Naive thymus-derived CD4-positive, alpha-beta T cell (primary cell): ENCODE measurements at regions of chr17 and their contacts with region 1.

Region 1: GRCh38 chr17:49997791-49998703 is 3.0 kb upstream of the DLX3 start:
- DNase-seq: peak; percentile 69 to 90 (median 81)
- ATAC-seq: peak; percentile 89
- H3K4me3 ChIP-seq: no peak overlapping the region
- H3K4me3 Mint-ChIP-seq: peak overlapping the region in 2 of 10 donors; percentile 33 to 71
- H3K27ac ChIP-seq: no peak overlapping the region
- H3K27ac Mint-ChIP-seq: no peak overlapping the region
- H3K4me1 ChIP-seq: peaks cover 11 to 30% of the 10 kb centered on the region in 2 donors
- H3K4me1 Mint-ChIP-seq: peaks cover 12 to 40% (median 28%) of the 10 kb centered on the region in 7 donors
- H3K27me3 ChIP-seq: peaks cover 19 to 35% of the 10 kb centered on the region in 2 donors
- H3K27me3 Mint-ChIP-seq: peaks cover 73 to 79% (median 76%) of the 10 kb centered on the region in 5 donors

Region 2: DNA sequence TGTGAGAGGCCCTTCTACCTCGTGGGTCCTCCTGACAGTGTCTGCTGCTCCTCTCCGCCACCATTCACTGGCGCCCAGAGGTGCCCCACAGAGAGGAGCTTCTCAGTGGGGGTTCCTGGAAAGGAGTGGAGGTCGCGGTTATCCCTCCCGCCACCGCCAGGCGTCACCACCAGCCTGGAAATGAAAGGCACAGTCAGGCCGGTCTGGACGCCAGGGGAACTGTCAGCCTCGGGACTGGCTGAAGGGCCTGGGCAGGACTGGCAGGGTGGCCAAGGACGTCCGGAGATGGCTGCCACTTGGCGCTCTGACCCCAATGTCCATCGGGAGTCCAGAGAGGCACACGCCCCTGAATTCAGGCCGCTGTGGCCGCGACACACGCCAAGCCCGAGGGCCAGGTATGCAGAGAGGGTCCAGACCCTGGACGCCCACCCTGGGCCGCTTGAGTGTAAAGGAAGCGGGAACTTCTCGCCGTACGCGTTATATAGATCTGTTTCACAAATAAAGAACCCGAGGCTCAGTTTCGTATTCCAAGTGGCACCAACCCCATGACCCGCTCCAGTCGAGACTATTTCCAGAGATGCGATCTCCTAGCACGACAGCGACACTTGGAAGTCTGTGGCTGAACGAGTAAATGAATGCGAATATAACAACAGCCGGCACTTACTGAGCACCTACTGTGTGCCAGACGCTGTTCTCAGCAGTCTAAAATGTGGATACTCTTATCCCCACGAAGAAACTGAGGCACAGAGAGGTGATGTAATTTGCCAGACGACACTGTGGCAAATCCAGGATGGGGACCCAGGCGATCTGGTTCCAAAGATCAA is 430.0 kb before region 1 on chr17:
- CTCF ChIA-PET with region 1: interaction called, 15 read pairs
- POLR2A ChIA-PET with region 1: no interaction called
- intact Hi-C with region 1: loop called (anchors 1 kb)
- DNase-seq: peak; percentile 50 to 88 (median 72)
- ATAC-seq: peak; percentile 64
- H3K4me3 ChIP-seq: peak overlapping the region; percentile 15
- H3K4me3 Mint-ChIP-seq: peak overlapping the region; percentile 53 to 80 (median 70)
- H3K27ac ChIP-seq: no peak overlapping the region
- H3K27ac Mint-ChIP-seq: peak overlapping the region in 1 of 9 donors; percentile 7
- H3K4me1 ChIP-seq: peaks cover 6 to 7% of the 10 kb centered on the region in 2 donors
- H3K4me1 Mint-ChIP-seq: peaks cover 0 to 28% (median 15%) of the 10 kb centered on the region in 7 donors
- H3K27me3 ChIP-seq: no peaks in the 10 kb centered on the region
- H3K27me3 Mint-ChIP-seq: peaks cover under 1 to 38% (median 4%) of the 10 kb centered on the region in 5 donors

Region 3: DNA sequence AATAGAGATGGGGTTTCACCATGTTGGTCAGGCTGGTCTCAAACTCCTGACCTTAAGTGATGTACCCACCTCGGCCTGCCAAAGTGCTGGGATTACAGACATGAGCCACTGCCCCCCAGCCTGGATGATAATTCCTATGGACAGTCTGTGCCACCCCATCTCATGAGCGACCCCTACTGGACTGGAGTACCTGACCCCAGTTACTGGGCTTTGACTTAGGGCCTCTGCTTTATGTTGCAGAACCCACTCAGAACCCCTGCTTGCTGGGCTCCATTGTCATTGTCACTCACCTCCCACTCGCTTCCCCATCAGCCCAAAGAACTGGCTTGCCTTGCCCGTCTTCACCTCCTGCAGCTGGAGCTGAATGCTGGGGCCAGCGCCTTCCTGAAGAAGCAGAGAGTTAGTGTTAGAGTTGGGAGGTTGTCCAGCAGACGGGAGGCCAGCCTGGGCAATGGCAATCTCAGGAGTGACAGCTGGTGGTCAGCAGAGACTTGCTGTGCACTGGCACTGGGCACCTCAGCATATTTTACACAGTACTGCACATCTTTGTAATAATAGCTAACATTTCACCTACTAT is 154.2 kb before region 1 on chr17:
- CTCF ChIA-PET with region 1: no interaction called
- POLR2A ChIA-PET with region 1: no interaction called
- intact Hi-C with region 1: no loop called
- DNase-seq: no peak
- ATAC-seq: no peak
- H3K4me3 ChIP-seq: no peak overlapping the region
- H3K4me3 Mint-ChIP-seq: no peak overlapping the region
- H3K27ac ChIP-seq: no peak overlapping the region
- H3K27ac Mint-ChIP-seq: peak overlapping the region in 5 of 9 donors; percentile 3 to 76 (median 68)
- H3K4me1 ChIP-seq: peaks cover 0 to 3% of the 10 kb centered on the region in 2 donors
- H3K4me1 Mint-ChIP-seq: peaks cover 0 to 24% (median 18%) of the 10 kb centered on the region in 7 donors
- H3K27me3 ChIP-seq: no peaks in the 10 kb centered on the region
- H3K27me3 Mint-ChIP-seq: no peaks in the 10 kb centered on the region

Region 4: DNA sequence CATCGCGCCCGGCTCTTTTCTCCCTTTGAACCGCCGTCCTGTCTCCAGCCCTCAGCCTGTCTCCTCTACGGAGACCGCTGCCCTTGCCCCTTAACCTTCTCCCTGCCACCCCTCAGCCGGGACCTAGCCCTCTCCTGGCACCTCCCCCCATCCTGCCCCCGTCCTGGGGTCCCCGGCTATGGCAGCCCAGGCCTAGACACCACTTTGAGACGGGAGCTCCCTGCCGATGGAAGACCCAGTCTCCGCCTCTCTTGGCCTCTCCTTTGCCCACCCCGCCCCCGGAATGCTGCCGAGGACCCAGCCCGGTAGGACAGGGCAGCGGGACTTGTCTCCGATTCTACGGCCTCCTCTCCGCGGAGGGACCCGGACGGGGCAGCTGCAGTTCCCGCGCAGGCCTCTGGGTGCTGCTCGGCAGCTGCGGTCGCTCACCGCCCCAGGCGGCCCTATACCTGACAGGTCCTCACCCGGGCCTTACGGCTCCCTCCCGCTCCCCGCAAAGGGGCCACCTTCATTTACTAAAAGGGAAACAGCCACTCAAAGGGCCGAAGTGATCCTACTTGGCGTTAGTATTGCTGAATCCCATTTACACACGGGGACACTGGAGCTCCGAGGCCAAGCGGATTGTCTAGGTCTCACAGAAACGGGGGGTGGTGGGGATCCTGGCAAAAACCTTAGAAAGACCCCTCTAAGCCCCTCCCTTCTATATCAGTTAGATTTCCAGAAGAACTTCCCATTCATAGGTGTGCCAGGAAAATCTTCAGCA is 117.6 kb before region 1 on chr17:
- CTCF ChIA-PET with region 1: interaction called, 35 read pairs
- POLR2A ChIA-PET with region 1: no interaction called
- intact Hi-C with region 1: loop called (anchors 1 kb)
- DNase-seq: peak; percentile 31 to 77 (median 58)
- ATAC-seq: peak; percentile 95
- H3K4me3 ChIP-seq: no peak overlapping the region
- H3K4me3 Mint-ChIP-seq: peak overlapping the region in 8 of 10 donors; percentile 21 to 74 (median 44)
- H3K27ac ChIP-seq: no peak overlapping the region
- H3K27ac Mint-ChIP-seq: no peak overlapping the region
- H3K4me1 ChIP-seq: peaks cover 3 to 7% of the 10 kb centered on the region in 2 donors
- H3K4me1 Mint-ChIP-seq: peaks cover 0 to 7% (median 5%) of the 10 kb centered on the region in 7 donors
- H3K27me3 ChIP-seq: peaks cover 4 to 9% of the 10 kb centered on the region in 2 donors
- H3K27me3 Mint-ChIP-seq: peaks cover 20 to 52% (median 43%) of the 10 kb centered on the region in 5 donors

Region 5: GRCh38 chr17:49926886-49927285 is 71.2 kb before region 1 on chr17:
- CTCF ChIA-PET with region 1: no interaction called
- POLR2A ChIA-PET with region 1: no interaction called
- intact Hi-C with region 1: no loop called
- DNase-seq: no peak
- ATAC-seq: no peak
- H3K4me3 ChIP-seq: no peak overlapping the region
- H3K4me3 Mint-ChIP-seq: no peak overlapping the region
- H3K27ac ChIP-seq: no peak overlapping the region
- H3K27ac Mint-ChIP-seq: no peak overlapping the region
- H3K4me1 ChIP-seq: no peaks in the 10 kb centered on the region
- H3K4me1 Mint-ChIP-seq: peaks cover 0 to 2% (median 0%) of the 10 kb centered on the region in 7 donors
- H3K27me3 ChIP-seq: no peaks in the 10 kb centered on the region
- H3K27me3 Mint-ChIP-seq: peaks cover 4 to 50% (median 26%) of the 10 kb centered on the region in 5 donors

Region 6: DNA sequence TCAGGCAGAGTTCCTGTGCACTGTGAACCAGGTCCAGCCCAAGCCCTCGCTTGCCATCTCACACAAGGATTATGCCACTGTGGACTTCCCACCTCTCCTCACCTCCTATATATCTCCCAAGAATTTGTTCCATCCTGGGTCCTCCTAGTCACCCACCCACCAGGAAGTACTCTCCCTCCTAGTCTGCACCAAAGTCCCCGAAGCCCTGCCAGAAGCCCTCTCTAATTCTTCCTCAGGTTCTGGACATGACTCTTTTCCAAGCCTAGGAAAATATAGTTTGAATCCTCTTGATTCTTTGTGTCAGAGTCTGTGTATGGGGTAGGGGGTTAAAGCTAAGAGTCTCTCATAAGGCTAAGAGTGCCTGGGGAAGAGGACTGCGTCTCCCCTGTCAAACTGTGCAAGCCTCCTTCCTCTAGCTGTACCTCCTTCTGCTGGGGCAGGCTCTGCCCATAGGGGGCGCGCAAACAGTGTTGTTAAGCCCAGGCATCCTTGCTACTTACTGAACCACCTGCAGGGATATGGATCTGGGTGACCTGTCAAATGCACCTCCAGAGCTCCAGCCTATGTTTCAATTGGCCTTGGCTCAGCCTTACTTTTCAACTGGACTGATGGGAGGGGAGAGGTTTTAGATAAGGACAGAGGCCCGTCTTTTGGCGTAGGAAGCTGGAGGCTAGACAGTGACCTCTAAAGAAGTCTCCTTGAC is 45.7 kb before region 1 on chr17:
- CTCF ChIA-PET with region 1: interaction called, 152 read pairs
- POLR2A ChIA-PET with region 1: interaction called, 3 read pairs
- intact Hi-C with region 1: loop called (anchors 1 kb)
- DNase-seq: peak; percentile 62 to 82 (median 77)
- ATAC-seq: peak; percentile 95
- H3K4me3 ChIP-seq: no peak overlapping the region
- H3K4me3 Mint-ChIP-seq: no peak overlapping the region
- H3K27ac ChIP-seq: no peak overlapping the region
- H3K27ac Mint-ChIP-seq: no peak overlapping the region
- H3K4me1 ChIP-seq: no peaks in the 10 kb centered on the region
- H3K4me1 Mint-ChIP-seq: peaks cover 0 to 2% (median 0%) of the 10 kb centered on the region in 7 donors
- H3K27me3 ChIP-seq: no peaks in the 10 kb centered on the region
- H3K27me3 Mint-ChIP-seq: peaks cover 38 to 48% (median 40%) of the 10 kb centered on the region in 5 donors

Region 7: GRCh38 chr17:49980703-49981197 is 17.3 kb before region 1 on chr17:
- CTCF ChIA-PET with region 1: interaction called, 40 read pairs
- POLR2A ChIA-PET with region 1: interaction called, 3 read pairs
- intact Hi-C with region 1: no loop called
- DNase-seq: no peak
- ATAC-seq: no peak
- H3K4me3 ChIP-seq: no peak overlapping the region
- H3K4me3 Mint-ChIP-seq: no peak overlapping the region
- H3K27ac ChIP-seq: no peak overlapping the region
- H3K27ac Mint-ChIP-seq: peak overlapping the region in 1 of 9 donors; percentile 46
- H3K4me1 ChIP-seq: no peaks in the 10 kb centered on the region
- H3K4me1 Mint-ChIP-seq: peaks cover 0 to 2% (median 0%) of the 10 kb centered on the region in 7 donors
- H3K27me3 ChIP-seq: no peaks in the 10 kb centered on the region
- H3K27me3 Mint-ChIP-seq: peaks cover 17 to 60% (median 30%) of the 10 kb centered on the region in 5 donors